Activated T-helper 1 cell treated with anti-CD3 and anti-CD28 coated beads, Interleukin-12 subunit alpha, Interleukin-12 subunit beta, Interleukin-2, Interleukin-4 antibody, amounts not matched to agents 30 ng/mL and 10 ng/mL and 1 ng/mL, durations not matched to agents 14 hours and 24 hours and 36 hours (primary cell): ENCODE measurements at regions of chr11 and their contacts with region 1.

Region 1: DNA sequence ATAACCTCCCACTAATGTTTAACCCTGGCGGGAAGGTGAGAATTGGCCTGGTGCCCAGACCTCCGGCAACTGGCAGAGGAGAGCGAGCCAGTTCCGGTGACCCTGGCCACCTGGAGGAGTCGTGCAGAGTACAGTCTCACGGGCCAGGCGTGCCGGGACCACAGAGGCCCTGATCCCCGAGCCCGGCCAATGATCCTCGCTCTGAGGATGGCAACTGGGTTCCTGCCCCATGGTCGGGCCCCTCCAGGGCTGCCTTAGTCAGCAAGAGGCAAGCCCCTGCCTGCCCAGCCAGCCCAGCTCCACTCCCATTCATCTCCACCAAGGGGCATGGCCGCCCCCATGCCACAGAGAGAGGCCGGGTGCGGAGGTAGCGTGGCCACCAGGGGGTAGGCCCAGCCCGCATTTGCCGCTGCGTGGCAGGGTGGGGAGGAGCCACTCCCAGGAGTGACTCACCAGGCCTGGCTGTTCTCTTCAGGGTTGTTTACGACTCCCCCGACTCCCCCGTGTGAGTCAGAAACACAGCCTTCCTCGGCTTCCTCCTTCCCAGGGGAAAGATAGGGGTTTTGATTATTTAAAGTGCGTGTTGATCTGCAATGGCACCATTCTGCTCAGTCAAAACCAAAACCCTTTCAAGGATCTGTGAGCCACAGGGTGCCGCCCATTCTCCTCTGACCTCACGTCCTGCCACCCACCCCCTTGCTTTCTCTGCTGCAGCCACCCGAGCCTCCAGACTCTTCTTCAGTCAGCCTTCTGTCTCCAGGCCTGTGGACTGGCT is at the start of gene SLC25A45:
- DNase-seq: peak; percentile 87
- H3K4me3 Mint-ChIP-seq: peak within 1 kb of the TSS; percentile 92
- H3K27ac Mint-ChIP-seq: peak within 1 kb of the TSS; percentile 99
- H3K4me1 Mint-ChIP-seq: peaks cover 34% of the 10 kb centered on the region
- H3K27me3 Mint-ChIP-seq: no peaks in the 10 kb centered on the region
- total RNA-seq, gene SLC25A45: 15.3 and 19.4 TPM in 2 replicates

Region 2: DNA sequence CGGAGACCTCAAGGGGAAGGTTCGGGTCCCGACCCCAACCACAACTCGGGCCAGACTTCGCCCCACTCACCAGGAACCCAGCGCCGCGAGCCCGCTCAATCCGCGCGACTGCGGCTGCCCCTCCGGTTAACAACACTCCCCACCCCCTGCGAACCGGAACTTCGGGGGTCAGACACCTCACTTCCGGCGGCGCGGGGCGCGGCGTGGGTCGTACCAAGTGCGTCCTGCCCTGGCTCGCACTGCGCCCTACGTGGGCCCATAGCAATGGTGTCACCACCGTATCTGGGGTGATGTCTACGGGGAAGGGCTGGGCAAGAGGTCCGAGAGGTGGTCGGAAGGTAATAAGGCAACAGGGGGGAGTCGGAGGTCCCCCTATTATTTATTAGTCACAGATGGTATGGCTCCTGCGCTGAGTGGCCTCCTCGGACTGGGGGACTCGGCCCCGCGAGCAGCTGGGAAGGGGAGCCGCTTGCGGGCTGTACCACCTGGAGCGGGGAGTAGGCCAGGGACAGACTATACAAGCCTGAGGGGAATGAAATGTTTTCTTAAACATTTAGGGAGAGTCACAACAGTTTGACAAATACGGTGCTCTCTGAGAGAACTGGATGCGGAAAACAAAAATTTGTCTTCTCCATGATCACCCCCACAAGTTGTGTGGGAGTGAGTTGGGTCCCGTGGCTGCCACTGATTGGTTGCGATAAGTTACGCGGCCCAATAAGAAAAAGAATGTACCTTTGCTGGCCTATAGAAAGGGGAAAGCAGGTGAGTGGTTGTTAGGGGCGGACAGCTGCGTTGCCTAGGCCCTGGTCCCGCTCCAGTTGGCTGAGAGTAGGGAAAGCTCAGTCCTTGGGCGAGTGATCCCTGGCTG is 247.6 kb before region 1 on chr11 and contains the start of gene SYVN1:
- intact Hi-C with region 1: loop called (anchors 1 kb)
- DNase-seq: peak; percentile 91
- H3K4me3 Mint-ChIP-seq: peak within 1 kb of the TSS; percentile 97
- H3K27ac Mint-ChIP-seq: peak within 1 kb of the TSS; percentile 97
- H3K4me1 Mint-ChIP-seq: peaks cover 32% of the 10 kb centered on the region
- H3K27me3 Mint-ChIP-seq: no peaks in the 10 kb centered on the region
- total RNA-seq, gene SYVN1: 42.3 and 45.8 TPM in 2 replicates

Region 3: DNA sequence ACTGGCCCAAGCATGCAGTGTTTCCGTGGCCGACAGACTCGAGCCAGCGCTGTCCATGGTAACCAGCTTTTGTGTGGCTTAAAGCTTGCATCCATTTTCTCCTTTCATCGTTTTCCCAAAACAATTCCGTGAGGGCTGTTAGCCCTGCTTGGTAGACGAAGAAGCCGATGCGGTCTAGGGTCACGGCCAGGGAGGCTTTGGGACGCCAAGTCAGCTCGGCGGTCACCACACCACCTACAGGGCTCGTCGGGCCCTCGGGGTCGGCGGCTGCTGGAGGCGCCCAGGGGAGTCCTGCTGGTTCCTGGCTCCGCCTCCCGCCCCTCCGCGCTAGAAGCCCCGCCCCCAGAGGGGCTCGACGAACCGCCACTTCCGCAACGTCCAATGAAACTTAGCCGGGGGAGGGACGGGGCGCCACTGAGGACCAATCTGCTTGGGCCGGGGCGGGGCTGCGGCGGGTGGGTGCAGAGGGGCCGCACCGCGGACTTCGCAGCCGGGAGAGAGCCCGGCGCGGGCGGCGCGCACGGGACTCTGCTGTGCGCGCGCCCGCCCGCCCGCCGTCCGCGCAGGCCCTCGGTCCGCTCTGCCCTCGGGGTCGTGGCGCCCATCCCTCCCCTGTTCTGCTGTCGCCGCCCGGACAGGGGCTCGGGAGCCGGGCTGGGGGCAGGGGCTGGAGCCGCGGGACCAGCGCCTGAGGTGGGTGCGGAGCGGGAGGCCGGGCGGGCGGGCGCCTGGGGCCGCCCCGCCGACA is 27.8 kb before region 1 on chr11 and contains the start of gene TIGD3:
- intact Hi-C with region 1: loop called (anchors 2 kb)
- DNase-seq: peak; percentile 93
- H3K4me3 Mint-ChIP-seq: peak within 1 kb of the TSS; percentile 89
- H3K27ac Mint-ChIP-seq: peak within 1 kb of the TSS; percentile 81
- H3K4me1 Mint-ChIP-seq: peaks cover 8% of the 10 kb centered on the region
- H3K27me3 Mint-ChIP-seq: peaks cover 16% of the 10 kb centered on the region
- total RNA-seq, gene TIGD3: 1.1 TPM in 2 replicates

Region 4: GRCh38 chr11:65432686-65433582 is 50.7 kb after region 1 on chr11:
- intact Hi-C with region 1: loop called (anchors 1 kb)
- DNase-seq: no peak
- H3K4me3 Mint-ChIP-seq: peak overlapping the region; percentile 45
- H3K27ac Mint-ChIP-seq: peak overlapping the region; percentile 75
- H3K4me1 Mint-ChIP-seq: peaks cover 91% of the 10 kb centered on the region
- H3K27me3 Mint-ChIP-seq: no peaks in the 10 kb centered on the region

Region 5: DNA sequence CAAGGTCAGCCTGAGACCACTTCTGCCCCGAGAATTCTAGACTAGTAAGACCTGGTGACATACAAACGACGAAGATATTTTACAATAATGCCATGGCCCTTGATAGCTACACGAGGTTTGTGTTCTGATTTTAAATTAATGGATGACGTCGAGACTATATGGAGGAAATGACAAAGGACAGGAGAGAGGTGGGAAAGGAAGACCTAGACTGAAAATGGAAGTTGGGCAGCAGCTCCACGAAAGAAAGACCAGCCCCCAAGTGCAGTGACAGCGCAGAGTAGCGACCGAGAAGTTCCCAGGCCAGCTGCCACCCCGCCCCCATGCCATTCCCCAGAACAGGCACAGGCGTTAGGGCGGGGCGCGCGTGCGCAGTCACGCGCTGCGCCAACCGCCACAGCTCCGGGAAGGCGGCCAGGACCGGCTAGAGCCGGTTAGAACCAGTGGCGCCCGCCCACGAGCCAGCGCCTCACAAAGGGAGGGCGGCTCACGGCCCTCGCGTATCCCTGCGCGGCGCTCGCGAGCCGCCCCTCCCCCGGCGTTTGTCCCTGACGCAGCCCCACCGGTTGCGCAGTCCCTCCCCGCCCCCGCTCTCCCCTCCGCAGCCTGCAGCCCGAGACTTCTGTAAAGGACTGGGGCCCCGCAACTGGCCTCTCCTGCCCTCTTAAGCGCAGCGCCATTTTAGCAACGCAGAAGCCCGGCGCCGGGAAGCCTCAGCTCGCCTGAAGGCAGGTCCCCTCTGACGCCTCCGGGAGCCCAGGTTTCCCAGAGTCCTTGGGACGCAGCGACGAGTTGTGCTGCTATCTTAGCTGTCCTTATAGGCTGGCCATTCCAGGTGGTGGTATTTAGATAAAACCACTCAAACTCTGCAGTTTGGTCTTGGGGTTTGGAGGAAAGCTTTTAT is 115.2 kb after region 1 on chr11:
- intact Hi-C with region 1: loop called (anchors 1 kb)
- DNase-seq: peak; percentile 98
- H3K4me3 Mint-ChIP-seq: no peak overlapping the region
- H3K27ac Mint-ChIP-seq: no peak overlapping the region
- H3K4me1 Mint-ChIP-seq: peaks cover 37% of the 10 kb centered on the region
- H3K27me3 Mint-ChIP-seq: no peaks in the 10 kb centered on the region

Region 6: GRCh38 chr11:65524741-65525545 is 142.7 kb after region 1 on chr11 and contains the start of gene SCYL1:
- intact Hi-C with region 1: no loop called
- DNase-seq: peak; percentile 71
- H3K4me3 Mint-ChIP-seq: peak within 1 kb of the TSS; percentile 89
- H3K27ac Mint-ChIP-seq: peak within 1 kb of the TSS; percentile 82
- H3K4me1 Mint-ChIP-seq: peaks cover 46% of the 10 kb centered on the region
- H3K27me3 Mint-ChIP-seq: no peaks in the 10 kb centered on the region
- total RNA-seq, gene SCYL1: 103 and 109 TPM in 2 replicates

Region 7: GRCh38 chr11:65575568-65576231 is 193.5 kb after region 1 on chr11 and contains the start of gene EHBP1L1:
- intact Hi-C with region 1: loop called (anchors 1 kb)
- DNase-seq: peak; percentile 76
- H3K4me3 Mint-ChIP-seq: peak within 1 kb of the TSS; percentile 92
- H3K27ac Mint-ChIP-seq: peak within 1 kb of the TSS; percentile 88
- H3K4me1 Mint-ChIP-seq: peaks cover 48% of the 10 kb centered on the region
- H3K27me3 Mint-ChIP-seq: no peaks in the 10 kb centered on the region
- total RNA-seq, gene EHBP1L1: 168 and 178 TPM in 2 replicates

Region 8: GRCh38 chr11:65711785-65712632 is 329.8 kb after region 1 on chr11 and contains the start of gene KAT5:
- intact Hi-C with region 1: loop called (anchors 5 kb)
- DNase-seq: peak; percentile 98
- H3K4me3 Mint-ChIP-seq: peak within 1 kb of the TSS; percentile 96
- H3K27ac Mint-ChIP-seq: peak within 1 kb of the TSS; percentile 98
- H3K4me1 Mint-ChIP-seq: peaks cover 29% of the 10 kb centered on the region
- H3K27me3 Mint-ChIP-seq: no peaks in the 10 kb centered on the region
- total RNA-seq, gene KAT5: 68.1 and 75.0 TPM in 2 replicates